Activated T-helper 1 cell treated with anti-CD3 and anti-CD28 coated beads, Interleukin-12 subunit alpha, Interleukin-12 subunit beta, Interleukin-2, Interleukin-4 antibody, amounts not matched to agents 30 ng/mL and 10 ng/mL and 1 ng/mL, durations not matched to agents 14 hours and 24 hours and 36 hours (primary cell): ENCODE measurements at regions of chr10 and their contacts with region 1.

Region 1: DNA sequence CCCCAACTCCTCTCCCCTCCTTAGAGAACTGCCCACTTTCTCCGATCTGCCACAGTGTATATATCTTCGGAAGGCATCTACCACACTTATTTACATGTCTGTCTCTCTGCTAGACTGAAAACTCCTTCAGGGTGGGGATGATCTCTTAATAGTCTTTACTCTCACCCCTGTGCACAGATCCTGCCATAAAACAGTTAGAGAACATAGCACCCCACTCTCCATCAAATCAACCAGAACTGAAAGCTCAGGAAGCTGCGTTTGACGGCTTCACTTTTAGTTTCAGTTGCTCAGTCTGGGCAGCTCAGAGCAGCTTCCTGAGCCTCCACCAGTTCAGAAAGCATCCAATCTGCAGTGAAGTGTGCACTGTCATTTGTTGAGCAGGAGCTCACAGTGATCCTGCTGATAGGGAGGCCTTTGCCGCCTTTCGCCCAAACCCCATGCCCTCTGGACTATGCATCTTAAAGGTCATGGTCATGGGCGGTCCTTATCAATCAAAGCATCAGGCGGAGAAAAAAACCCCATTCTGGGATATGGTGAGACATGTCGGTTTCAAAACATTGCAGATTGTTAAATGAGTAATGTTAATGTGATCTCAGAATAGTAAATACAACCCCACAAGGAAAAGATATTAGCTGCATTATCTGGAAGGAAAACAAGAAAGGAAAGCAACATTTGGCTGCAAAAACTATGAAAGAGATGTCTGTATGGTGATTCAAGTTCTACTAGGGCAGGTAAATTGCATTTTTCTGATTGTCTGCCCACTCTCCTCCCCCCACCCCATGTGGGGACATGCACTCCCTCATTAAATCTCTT is 167.1 kb upstream of the ADO start:
- DNase-seq: peak; percentile 73
- H3K4me3 Mint-ChIP-seq: no peak overlapping the region
- H3K27ac Mint-ChIP-seq: no peak overlapping the region
- H3K4me1 Mint-ChIP-seq: peaks cover 28% of the 10 kb centered on the region
- H3K27me3 Mint-ChIP-seq: no peaks in the 10 kb centered on the region

Region 2: DNA sequence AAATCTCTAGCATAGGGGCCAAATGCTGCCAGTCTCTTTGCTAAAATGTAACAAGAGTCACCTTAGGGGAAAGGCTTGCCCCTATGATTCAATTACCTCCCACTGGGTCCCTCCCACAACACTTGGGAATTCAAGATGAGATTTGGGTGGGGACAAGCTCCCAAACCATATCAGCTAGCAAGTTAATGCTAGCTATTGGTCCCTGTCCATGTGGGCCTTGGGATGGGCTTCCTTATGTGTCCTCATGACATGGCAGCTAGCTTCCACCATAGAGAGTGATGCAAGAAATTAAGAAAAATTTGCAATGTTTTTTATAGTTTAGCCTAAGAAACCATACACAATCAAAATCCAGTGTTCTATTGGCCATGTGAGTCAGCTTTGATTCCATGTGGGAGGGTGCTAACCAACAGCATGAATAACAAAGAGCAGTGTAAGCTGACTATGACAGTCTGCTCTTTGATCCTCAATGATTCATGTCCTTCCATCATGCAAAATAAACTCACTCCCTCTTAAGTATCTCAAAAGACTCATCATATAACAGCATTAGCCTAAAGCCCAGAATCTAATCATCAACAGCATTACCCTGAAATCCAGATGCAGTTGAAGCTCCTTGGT is 285.0 kb before region 1 on chr10:
- intact Hi-C with region 1: loop called (anchors 10 kb)
- DNase-seq: no peak
- H3K4me3 Mint-ChIP-seq: no peak overlapping the region
- H3K27ac Mint-ChIP-seq: peak overlapping the region; percentile 7
- H3K4me1 Mint-ChIP-seq: peaks cover 11% of the 10 kb centered on the region
- H3K27me3 Mint-ChIP-seq: peaks cover 3% of the 10 kb centered on the region

Region 3: GRCh38 chr10:62653254-62653653 is 15.8 kb after region 1 on chr10:
- intact Hi-C with region 1: loop called (anchors 1 kb)
- DNase-seq: no peak
- H3K4me3 Mint-ChIP-seq: no peak overlapping the region
- H3K27ac Mint-ChIP-seq: peak overlapping the region; percentile 6
- H3K4me1 Mint-ChIP-seq: peaks cover 50% of the 10 kb centered on the region
- H3K27me3 Mint-ChIP-seq: no peaks in the 10 kb centered on the region

Region 4: DNA sequence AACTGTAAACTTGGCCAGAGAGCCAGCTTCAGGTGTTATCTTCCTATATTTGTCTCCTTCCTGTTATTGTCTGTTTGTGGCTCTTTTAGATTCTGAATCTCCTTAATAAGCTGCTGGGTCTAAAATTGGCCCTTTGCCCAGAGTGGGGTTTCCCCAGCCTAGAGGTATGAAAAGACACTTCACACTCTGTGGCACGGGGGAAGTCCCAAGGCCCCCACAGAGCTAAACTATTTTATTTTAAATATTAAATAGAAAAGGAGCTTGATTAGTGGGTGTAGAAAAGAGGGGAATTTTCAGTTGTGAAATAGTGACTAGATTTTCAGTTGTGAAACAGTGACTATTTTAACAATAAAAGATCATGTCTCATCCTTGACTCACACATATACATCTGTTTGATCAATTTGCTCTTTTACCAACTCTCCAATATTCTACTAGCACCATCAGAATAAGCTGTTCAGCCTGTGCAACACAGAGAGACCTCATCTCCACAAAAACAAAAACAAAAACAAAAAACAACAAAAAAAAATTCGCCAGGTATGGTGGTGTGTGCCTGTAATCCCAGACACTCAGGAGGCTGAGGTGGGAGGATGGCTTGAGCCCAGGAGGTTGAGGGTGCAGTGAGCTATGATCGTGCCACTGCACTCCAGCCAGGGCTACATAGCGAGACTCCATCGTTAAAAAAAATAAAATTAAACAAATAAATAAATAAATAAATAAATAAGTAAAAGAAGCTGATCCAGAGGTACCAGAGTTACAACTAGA is 142.2 kb after region 1 on chr10:
- intact Hi-C with region 1: loop called (anchors 1 kb)
- DNase-seq: peak; percentile 48
- H3K4me3 Mint-ChIP-seq: peak overlapping the region; percentile 27
- H3K27ac Mint-ChIP-seq: peak overlapping the region; percentile 76
- H3K4me1 Mint-ChIP-seq: peaks cover 45% of the 10 kb centered on the region
- H3K27me3 Mint-ChIP-seq: peaks cover 19% of the 10 kb centered on the region

Region 5: GRCh38 chr10:62858364-62858763 is 220.9 kb after region 1 on chr10:
- intact Hi-C with region 1: loop called (anchors 1 kb)
- DNase-seq: no peak
- H3K4me3 Mint-ChIP-seq: no peak overlapping the region
- H3K27ac Mint-ChIP-seq: no peak overlapping the region
- H3K4me1 Mint-ChIP-seq: peaks cover 60% of the 10 kb centered on the region
- H3K27me3 Mint-ChIP-seq: peaks cover 6% of the 10 kb centered on the region

Region 6: GRCh38 chr10:63133056-63133820 is 495.8 kb after region 1 on chr10 and contains the start of gene NRBF2:
- intact Hi-C with region 1: loop called (anchors 1 kb)
- DNase-seq: peak; percentile 97
- H3K4me3 Mint-ChIP-seq: peak within 1 kb of the TSS; percentile 91
- H3K27ac Mint-ChIP-seq: peak within 1 kb of the TSS; percentile 83
- H3K4me1 Mint-ChIP-seq: peaks cover 32% of the 10 kb centered on the region
- H3K27me3 Mint-ChIP-seq: peaks cover 3% of the 10 kb centered on the region
- total RNA-seq, gene NRBF2: 30.0 and 30.8 TPM in 2 replicates